Caco-2 (cell line): ENCODE measurements at regions of chr15 and their contacts with region 1.

Region 1: GRCh38 chr15:36883713-36884517 is 216.4 kb downstream of the MEIS2 start:
- DNase-seq: peak; percentile 86
- H3K4me3 ChIP-seq: peak overlapping the region; percentile 14; the same call in 1 of the 2 replicates
- H3K4me3 Mint-ChIP-seq: peak overlapping the region; percentile 70
- H3K27ac Mint-ChIP-seq: no peak overlapping the region
- H3K4me1 ChIP-seq: peaks cover 17% of the 10 kb centered on the region
- H3K4me1 Mint-ChIP-seq: peaks cover 24% of the 10 kb centered on the region
- H3K27me3 ChIP-seq: no peaks in the 10 kb centered on the region; the same call in 1 of the 2 replicates
- H3K27me3 Mint-ChIP-seq: peaks cover 2% of the 10 kb centered on the region
- CTCF ChIP-seq: peak; percentile 82 to 86

Region 2: GRCh38 chr15:36501063-36501678 is 382.7 kb before region 1 on chr15:
- CTCF ChIA-PET with region 1: no interaction called
- POLR2A ChIA-PET with region 1: no interaction called
- intact Hi-C with region 1: loop called (anchors 5 kb)
- DNase-seq: peak; percentile 55 to 60
- H3K4me3 ChIP-seq: no peak overlapping the region
- H3K4me3 Mint-ChIP-seq: no peak overlapping the region
- H3K27ac Mint-ChIP-seq: no peak overlapping the region
- H3K4me1 ChIP-seq: peaks cover 27% of the 10 kb centered on the region
- H3K4me1 Mint-ChIP-seq: no peaks in the 10 kb centered on the region
- H3K27me3 ChIP-seq: no peaks in the 10 kb centered on the region
- H3K27me3 Mint-ChIP-seq: no peaks in the 10 kb centered on the region
- CTCF ChIP-seq: peak; percentile 66 to 86

Region 3: GRCh38 chr15:36996538-36997181 is 112.7 kb after region 1 on chr15:
- CTCF ChIA-PET with region 1: no interaction called
- POLR2A ChIA-PET with region 1: no interaction called
- intact Hi-C with region 1: no loop called
- DNase-seq: no peak
- H3K4me3 ChIP-seq: no peak overlapping the region
- H3K4me3 Mint-ChIP-seq: no peak overlapping the region
- H3K27ac Mint-ChIP-seq: no peak overlapping the region
- H3K4me1 ChIP-seq: no peaks in the 10 kb centered on the region
- H3K4me1 Mint-ChIP-seq: no peaks in the 10 kb centered on the region
- H3K27me3 ChIP-seq: no peaks in the 10 kb centered on the region
- H3K27me3 Mint-ChIP-seq: no peaks in the 10 kb centered on the region
- CTCF ChIP-seq: no peak

Region 4: GRCh38 chr15:37045859-37046740 is 162.2 kb after region 1 on chr15:
- CTCF ChIA-PET with region 1: no interaction called
- POLR2A ChIA-PET with region 1: no interaction called
- intact Hi-C with region 1: loop called (anchors 5 kb)
- DNase-seq: peak; percentile 44 to 48
- H3K4me3 ChIP-seq: no peak overlapping the region
- H3K4me3 Mint-ChIP-seq: peak overlapping the region; percentile 69
- H3K27ac Mint-ChIP-seq: peak overlapping the region; percentile 36
- H3K4me1 ChIP-seq: peaks cover 29% of the 10 kb centered on the region
- H3K4me1 Mint-ChIP-seq: peaks cover 30% of the 10 kb centered on the region
- H3K27me3 ChIP-seq: no peaks in the 10 kb centered on the region
- H3K27me3 Mint-ChIP-seq: no peaks in the 10 kb centered on the region
- CTCF ChIP-seq: no peak

Region 5: DNA sequence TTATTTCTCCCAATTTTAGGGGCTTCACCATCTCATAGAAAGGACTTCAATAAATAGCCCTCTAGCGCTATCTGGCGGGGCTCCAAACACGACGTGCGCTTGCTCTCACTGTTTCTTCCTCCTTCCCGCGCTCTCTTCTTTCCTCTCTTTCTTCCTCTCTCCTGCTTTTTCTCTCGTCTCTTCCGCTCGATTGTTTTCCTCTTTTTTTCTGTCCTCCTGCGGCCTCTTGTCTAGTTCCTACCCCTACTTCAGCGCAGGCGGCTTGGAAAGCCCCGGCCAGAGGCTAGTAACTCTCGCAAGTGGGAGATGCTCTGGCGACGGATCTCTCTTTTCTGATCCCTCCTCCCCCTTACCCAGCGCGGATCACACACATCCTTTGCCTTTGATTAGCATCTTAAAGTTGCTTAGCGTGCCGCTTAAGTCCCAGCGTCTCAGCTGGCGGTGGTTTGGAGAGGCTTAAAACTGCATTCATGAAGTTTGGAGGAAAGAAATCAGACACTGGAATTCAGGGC is 222.6 kb after region 1 on chr15:
- CTCF ChIA-PET with region 1: interaction called, 4 read pairs
- POLR2A ChIA-PET with region 1: no interaction called
- intact Hi-C with region 1: loop called (anchors 1 kb)
- DNase-seq: no peak
- H3K4me3 ChIP-seq: no peak overlapping the region
- H3K4me3 Mint-ChIP-seq: peak overlapping the region; percentile 8
- H3K27ac Mint-ChIP-seq: no peak overlapping the region
- H3K4me1 ChIP-seq: no peaks in the 10 kb centered on the region
- H3K4me1 Mint-ChIP-seq: peaks cover 21% of the 10 kb centered on the region
- H3K27me3 ChIP-seq: no peaks in the 10 kb centered on the region
- H3K27me3 Mint-ChIP-seq: no peaks in the 10 kb centered on the region
- CTCF ChIP-seq: peak; percentile 28 to 33

Region 6: GRCh38 chr15:37165395-37165794 is 281.5 kb after region 1 on chr15:
- CTCF ChIA-PET with region 1: no interaction called
- POLR2A ChIA-PET with region 1: no interaction called
- intact Hi-C with region 1: no loop called
- DNase-seq: no peak
- H3K4me3 ChIP-seq: no peak overlapping the region
- H3K4me3 Mint-ChIP-seq: no peak overlapping the region
- H3K27ac Mint-ChIP-seq: no peak overlapping the region
- H3K4me1 ChIP-seq: no peaks in the 10 kb centered on the region
- H3K4me1 Mint-ChIP-seq: no peaks in the 10 kb centered on the region
- H3K27me3 ChIP-seq: no peaks in the 10 kb centered on the region; the same call in 1 of the 2 replicates
- H3K27me3 Mint-ChIP-seq: peaks cover 4% of the 10 kb centered on the region
- CTCF ChIP-seq: no peak